Left cardiac atrium (tissue), 4 donors: ENCODE measurements at regions of chr1 and their contacts with region 1.

Region 1: GRCh38 chr1:246002725-246003441 is 504.2 kb downstream of the SMYD3 start:
- DNase-seq: peak; percentile 90
- ATAC-seq: peak; percentile 72 to 78

Region 2: GRCh38 chr1:245822987-245823386 is 179.9 kb before region 1 on chr1:
- intact Hi-C with region 1: loop called in 1 of 2 experiments (anchors 10 kb)
- DNase-seq: no peak
- ATAC-seq: peak in 1 of 2 donors; percentile 27

Region 3: DNA sequence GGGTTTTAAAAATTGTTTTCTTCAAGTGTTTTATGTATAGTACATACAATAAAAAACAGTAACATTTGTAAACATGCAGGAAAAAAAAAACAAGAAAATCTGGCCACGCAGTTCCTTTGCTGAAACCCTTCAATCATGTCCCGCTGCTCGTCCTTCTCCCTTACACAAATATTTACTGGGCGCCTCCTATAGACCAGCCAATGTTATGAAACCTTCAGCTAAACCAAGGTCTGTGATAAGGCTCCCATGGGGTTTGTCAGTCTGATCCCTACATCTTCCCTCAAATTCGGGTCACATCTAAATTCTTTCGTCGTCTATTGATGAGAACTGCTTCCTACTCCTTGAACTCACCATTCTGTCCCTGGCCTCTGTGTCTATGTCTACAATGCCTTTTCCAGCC is 79.7 kb before region 1 on chr1:
- intact Hi-C with region 1: no loop called
- DNase-seq: no peak
- ATAC-seq: no peak

Region 4: GRCh38 chr1:246020211-246020954 is 17.5 kb after region 1 on chr1:
- intact Hi-C with region 1: no loop called
- DNase-seq: no peak
- ATAC-seq: no peak

Region 5: DNA sequence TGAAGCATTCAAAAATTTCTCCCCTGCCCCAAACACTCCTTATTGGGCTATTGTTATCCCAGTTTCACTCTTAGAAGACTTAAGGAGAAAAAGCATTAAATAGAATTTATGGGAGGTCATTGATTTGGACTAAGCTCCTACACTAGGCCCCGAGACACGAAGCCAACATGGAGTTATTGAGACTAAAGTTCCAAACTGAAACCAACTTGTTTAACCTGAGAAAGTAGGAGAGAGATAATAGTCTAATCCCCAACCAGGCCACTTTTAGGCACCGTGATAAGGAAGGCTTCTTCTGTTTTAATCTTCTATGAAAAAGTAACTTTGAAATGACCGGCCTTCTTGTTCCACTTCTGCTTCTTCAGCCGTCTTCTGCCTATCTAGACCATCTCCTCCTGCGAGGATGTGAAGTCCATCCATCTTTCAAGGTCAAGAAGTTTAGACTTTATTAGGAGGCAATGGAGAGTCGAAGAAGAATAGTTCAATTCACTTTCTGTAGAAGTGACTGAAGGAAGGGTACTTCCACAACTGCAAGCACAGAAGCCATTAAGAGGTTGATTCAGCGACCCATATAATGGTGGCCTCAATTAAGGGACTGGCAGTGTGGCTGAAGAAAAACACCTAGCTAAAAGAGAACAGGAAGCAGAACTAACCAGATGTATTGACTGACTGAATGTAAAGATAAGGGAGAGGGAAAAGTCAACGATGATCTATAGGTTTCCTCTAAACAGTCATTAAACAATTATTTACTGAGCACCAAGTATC is 75.4 kb after region 1 on chr1:
- intact Hi-C with region 1: no loop called
- DNase-seq: no peak
- ATAC-seq: no peak